ENCODE measurements at regions of chr3 and their contacts with region 1.

Region 1: GRCh38 chr3:170357176-170357919 is at the start of gene SKIL:
- DNase-seq: peak; percentile 85
- H3K27ac ChIP-seq: peak within 1 kb of the TSS; percentile 99
- CTCF ChIP-seq: no peak

Region 2: GRCh38 chr3:170309046-170309445 is 48.3 kb before region 1 on chr3:
- CTCF ChIA-PET with region 1: interaction called, 3 read pairs
- POLR2A ChIA-PET with region 1: interaction called, 10 read pairs
- DNase-seq: no peak
- H3K27ac ChIP-seq: no peak overlapping the region
- CTCF ChIP-seq: no peak

Region 3: GRCh38 chr3:170346481-170347392 is 10.6 kb before region 1 on chr3:
- CTCF ChIA-PET with region 1: no interaction called
- POLR2A ChIA-PET with region 1: no interaction called
- DNase-seq: peak; percentile 58
- H3K27ac ChIP-seq: no peak overlapping the region
- CTCF ChIP-seq: no peak

Region 4: DNA sequence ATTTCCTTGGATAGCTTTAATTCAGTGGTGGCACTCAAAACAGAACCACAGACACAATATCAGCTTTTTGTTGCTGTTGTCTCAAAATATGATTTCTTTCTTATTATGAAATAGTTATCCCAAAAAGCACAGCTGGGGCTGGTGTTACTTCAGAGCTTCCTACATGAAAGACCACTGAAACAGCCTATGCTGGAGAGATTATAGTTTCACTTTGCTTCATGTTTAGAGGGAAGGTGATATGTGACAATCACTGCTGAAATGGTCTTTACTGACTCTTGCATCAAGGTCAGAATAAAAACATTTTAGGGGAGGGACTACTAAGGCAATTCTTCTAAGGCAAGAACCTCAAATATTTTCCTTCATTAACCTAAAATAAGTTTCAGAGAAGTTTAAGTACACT is 912.2 kb after region 1 on chr3:
- CTCF ChIA-PET with region 1: no interaction called
- POLR2A ChIA-PET with region 1: no interaction called
- DNase-seq: no peak
- H3K27ac ChIP-seq: no peak overlapping the region
- CTCF ChIP-seq: no peak